ENCODE measurements at regions of chr12 and their contacts with region 1.

Region 1: GRCh38 chr12:56688129-56688845 is at the start of gene PTGES3:
- DNase-seq: peak; percentile 94 to 99 (median 97)
- ATAC-seq: peak; percentile 69
- H3K4me3 ChIP-seq: peak within 1 kb of the TSS; percentile 75 to 99
- H3K4me3 Mint-ChIP-seq: peak within 1 kb of the TSS; percentile 98
- H3K27ac ChIP-seq: peak within 1 kb of the TSS; percentile 97 to 98
- H3K27ac Mint-ChIP-seq: peak within 1 kb of the TSS; percentile 99
- H3K4me1 ChIP-seq: peaks cover 35% of the 10 kb centered on the region
- H3K4me1 Mint-ChIP-seq: peaks cover 34% of the 10 kb centered on the region
- H3K27me3 ChIP-seq: no peaks in the 10 kb centered on the region
- H3K27me3 Mint-ChIP-seq: no peaks in the 10 kb centered on the region
- CTCF ChIP-seq: no peak
- total RNA-seq, gene PTGES3: 148 to 154 TPM

Region 2: GRCh38 chr12:56127888-56128669 is 560.2 kb before region 1 on chr12 and contains the start of gene ESYT1:
- CTCF ChIA-PET with region 1: no interaction called
- POLR2A ChIA-PET with region 1: no interaction called
- intact Hi-C with region 1: loop called in 1 of 2 experiments (anchors 5 kb)
- DNase-seq: peak; percentile 94 to 100 (median 96)
- ATAC-seq: peak; percentile 87
- H3K4me3 ChIP-seq: peak within 1 kb of the TSS; percentile 71 to 97
- H3K4me3 Mint-ChIP-seq: peak within 1 kb of the TSS; percentile 97
- H3K27ac ChIP-seq: peak within 1 kb of the TSS; percentile 79 to 86
- H3K27ac Mint-ChIP-seq: peak within 1 kb of the TSS; percentile 94
- H3K4me1 ChIP-seq: peaks cover 60% of the 10 kb centered on the region
- H3K4me1 Mint-ChIP-seq: peaks cover 64% of the 10 kb centered on the region
- H3K27me3 ChIP-seq: no peaks in the 10 kb centered on the region
- H3K27me3 Mint-ChIP-seq: no peaks in the 10 kb centered on the region
- CTCF ChIP-seq: no peak
- total RNA-seq, gene ESYT1: 82.4 to 83.0 TPM

Region 3: GRCh38 chr12:56630160-56630632 is 58.1 kb before region 1 on chr12 and contains the start of gene BAZ2A:
- CTCF ChIA-PET with region 1: interaction called, 12 read pairs
- POLR2A ChIA-PET with region 1: interaction called, 36 read pairs
- intact Hi-C with region 1: no loop called
- DNase-seq: peak; percentile 64 to 91 (median 85)
- ATAC-seq: peak; percentile 68
- H3K4me3 ChIP-seq: peak within 1 kb of the TSS; percentile 74 to 99
- H3K4me3 Mint-ChIP-seq: peak within 1 kb of the TSS; percentile 82
- H3K27ac ChIP-seq: peak within 1 kb of the TSS; percentile 84 to 93
- H3K27ac Mint-ChIP-seq: peak within 1 kb of the TSS; percentile 93
- H3K4me1 ChIP-seq: peaks cover 56% of the 10 kb centered on the region
- H3K4me1 Mint-ChIP-seq: peaks cover 64% of the 10 kb centered on the region
- H3K27me3 ChIP-seq: no peaks in the 10 kb centered on the region
- H3K27me3 Mint-ChIP-seq: no peaks in the 10 kb centered on the region
- CTCF ChIP-seq: no peak
- total RNA-seq, gene BAZ2A: 197 to 198 TPM

Region 4: GRCh38 chr12:56645717-56646446 is 42.4 kb before region 1 on chr12 and contains the start of gene ATP5F1B:
- CTCF ChIA-PET with region 1: interaction called, 3 read pairs
- POLR2A ChIA-PET with region 1: interaction called, 26 read pairs
- intact Hi-C with region 1: loop called (anchors 1 to 2 kb)
- DNase-seq: peak; percentile 77 to 99 (median 88)
- ATAC-seq: peak; percentile 93
- H3K4me3 ChIP-seq: peak within 1 kb of the TSS; percentile 96 to 99
- H3K4me3 Mint-ChIP-seq: peak within 1 kb of the TSS; percentile 96
- H3K27ac ChIP-seq: peak within 1 kb of the TSS; percentile 90 to 94
- H3K27ac Mint-ChIP-seq: peak within 1 kb of the TSS; percentile 99
- H3K4me1 ChIP-seq: peaks cover 21% of the 10 kb centered on the region
- H3K4me1 Mint-ChIP-seq: peaks cover 33% of the 10 kb centered on the region
- H3K27me3 ChIP-seq: no peaks in the 10 kb centered on the region
- H3K27me3 Mint-ChIP-seq: no peaks in the 10 kb centered on the region
- CTCF ChIP-seq: no peak
- total RNA-seq, gene ATP5F1B: 417 to 429 TPM

Region 5: DNA sequence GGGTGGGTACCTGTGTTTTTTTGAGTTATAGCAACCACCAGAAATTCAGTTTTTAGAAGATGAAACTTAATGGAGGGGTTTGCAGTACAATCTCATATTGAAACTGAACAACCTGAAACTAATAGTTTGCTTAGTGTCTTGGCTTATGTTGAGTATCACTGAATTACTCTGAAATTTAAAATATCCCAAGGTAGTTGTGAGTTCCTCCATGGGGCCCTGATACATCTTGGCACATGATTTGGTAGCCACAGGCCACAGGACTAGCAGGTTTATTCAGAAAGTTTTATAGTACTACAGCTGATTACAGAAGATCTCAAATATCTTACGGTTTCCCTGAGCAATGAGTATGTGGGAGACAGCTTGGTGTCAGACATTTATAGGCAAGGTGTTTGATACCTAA is 10.6 kb before region 1 on chr12:
- CTCF ChIA-PET with region 1: interaction called, 3 read pairs
- POLR2A ChIA-PET with region 1: interaction called, 19 read pairs
- intact Hi-C with region 1: no loop called
- DNase-seq: no peak
- ATAC-seq: no peak
- H3K4me3 ChIP-seq: no peak overlapping the region
- H3K4me3 Mint-ChIP-seq: no peak overlapping the region
- H3K27ac ChIP-seq: peak overlapping the region in 1 of 2 experiments; percentile 27
- H3K27ac Mint-ChIP-seq: peak overlapping the region; percentile 65
- H3K4me1 ChIP-seq: peaks cover 72% of the 10 kb centered on the region
- H3K4me1 Mint-ChIP-seq: peaks cover 74% of the 10 kb centered on the region
- H3K27me3 ChIP-seq: no peaks in the 10 kb centered on the region
- H3K27me3 Mint-ChIP-seq: no peaks in the 10 kb centered on the region
- CTCF ChIP-seq: no peak

Region 6: DNA sequence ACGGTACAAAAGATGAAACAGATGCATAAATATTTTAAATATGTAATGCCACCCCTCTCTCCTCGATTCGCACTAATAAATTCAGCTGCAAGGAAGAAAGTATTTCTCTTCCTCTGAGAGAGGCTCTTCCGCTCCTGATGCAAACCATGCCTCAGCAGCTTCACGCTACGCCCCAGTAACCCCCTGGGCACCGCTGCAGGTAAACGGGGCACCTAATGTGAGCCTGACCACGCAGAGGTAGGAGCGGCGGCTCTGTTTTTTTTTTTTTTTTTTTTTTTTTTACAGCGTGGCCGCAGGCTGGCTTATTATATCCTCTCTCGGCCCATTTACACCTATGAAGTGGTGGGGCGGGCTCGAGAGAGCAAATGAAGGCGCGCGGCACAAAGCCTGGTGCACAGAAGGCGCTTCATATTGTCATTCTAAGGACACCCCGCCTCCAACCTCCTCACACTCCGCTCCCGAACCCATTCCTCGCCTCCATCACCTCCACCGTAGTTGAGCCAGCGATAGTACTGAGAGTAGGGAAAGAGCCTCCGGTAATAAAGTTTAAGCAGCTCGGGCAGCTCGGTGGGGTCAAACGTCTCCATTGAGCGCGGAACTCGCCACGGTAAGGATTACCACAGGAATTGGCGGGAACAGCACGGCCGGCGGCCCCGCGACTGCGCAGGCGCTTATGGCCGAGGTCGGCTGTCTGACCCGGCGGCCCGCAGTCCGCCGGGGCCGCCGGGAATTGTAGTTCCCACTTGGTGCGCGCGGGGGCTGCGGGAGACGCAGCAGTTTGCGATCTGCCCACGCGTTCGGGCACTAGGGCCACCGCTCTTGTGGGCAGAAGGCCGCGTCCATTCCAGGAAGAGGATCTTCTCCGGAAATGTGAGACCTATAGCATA is 63.7 kb after region 1 on chr12 and contains the start of gene PRIM1:
- CTCF ChIA-PET with region 1: interaction called, 3 read pairs
- POLR2A ChIA-PET with region 1: interaction called, 3 read pairs
- intact Hi-C with region 1: loop called (anchors 1 kb)
- DNase-seq: peak; percentile 58 to 89 (median 81)
- ATAC-seq: peak; percentile 81
- H3K4me3 ChIP-seq: peak within 1 kb of the TSS; percentile 91 to 99
- H3K4me3 Mint-ChIP-seq: peak within 1 kb of the TSS; percentile 97
- H3K27ac ChIP-seq: peak within 1 kb of the TSS; percentile 71 to 76
- H3K27ac Mint-ChIP-seq: peak within 1 kb of the TSS; percentile 86
- H3K4me1 ChIP-seq: peaks cover 11% of the 10 kb centered on the region
- H3K4me1 Mint-ChIP-seq: peaks cover 22% of the 10 kb centered on the region
- H3K27me3 ChIP-seq: no peaks in the 10 kb centered on the region
- H3K27me3 Mint-ChIP-seq: no peaks in the 10 kb centered on the region
- CTCF ChIP-seq: peak; percentile 23
- total RNA-seq, gene PRIM1: 5.0 to 5.8 TPM

Region 7: GRCh38 chr12:56908136-56908535 is 219.8 kb after region 1 on chr12:
- CTCF ChIA-PET with region 1: no interaction called
- POLR2A ChIA-PET with region 1: no interaction called
- intact Hi-C with region 1: no loop called
- DNase-seq: no peak
- ATAC-seq: no peak
- H3K4me3 ChIP-seq: no peak overlapping the region
- H3K4me3 Mint-ChIP-seq: no peak overlapping the region
- H3K27ac ChIP-seq: no peak overlapping the region
- H3K27ac Mint-ChIP-seq: no peak overlapping the region
- H3K4me1 ChIP-seq: no peaks in the 10 kb centered on the region
- H3K4me1 Mint-ChIP-seq: no peaks in the 10 kb centered on the region
- H3K27me3 ChIP-seq: no peaks in the 10 kb centered on the region
- H3K27me3 Mint-ChIP-seq: peaks cover 12% of the 10 kb centered on the region
- CTCF ChIP-seq: no peak

Region 8: DNA sequence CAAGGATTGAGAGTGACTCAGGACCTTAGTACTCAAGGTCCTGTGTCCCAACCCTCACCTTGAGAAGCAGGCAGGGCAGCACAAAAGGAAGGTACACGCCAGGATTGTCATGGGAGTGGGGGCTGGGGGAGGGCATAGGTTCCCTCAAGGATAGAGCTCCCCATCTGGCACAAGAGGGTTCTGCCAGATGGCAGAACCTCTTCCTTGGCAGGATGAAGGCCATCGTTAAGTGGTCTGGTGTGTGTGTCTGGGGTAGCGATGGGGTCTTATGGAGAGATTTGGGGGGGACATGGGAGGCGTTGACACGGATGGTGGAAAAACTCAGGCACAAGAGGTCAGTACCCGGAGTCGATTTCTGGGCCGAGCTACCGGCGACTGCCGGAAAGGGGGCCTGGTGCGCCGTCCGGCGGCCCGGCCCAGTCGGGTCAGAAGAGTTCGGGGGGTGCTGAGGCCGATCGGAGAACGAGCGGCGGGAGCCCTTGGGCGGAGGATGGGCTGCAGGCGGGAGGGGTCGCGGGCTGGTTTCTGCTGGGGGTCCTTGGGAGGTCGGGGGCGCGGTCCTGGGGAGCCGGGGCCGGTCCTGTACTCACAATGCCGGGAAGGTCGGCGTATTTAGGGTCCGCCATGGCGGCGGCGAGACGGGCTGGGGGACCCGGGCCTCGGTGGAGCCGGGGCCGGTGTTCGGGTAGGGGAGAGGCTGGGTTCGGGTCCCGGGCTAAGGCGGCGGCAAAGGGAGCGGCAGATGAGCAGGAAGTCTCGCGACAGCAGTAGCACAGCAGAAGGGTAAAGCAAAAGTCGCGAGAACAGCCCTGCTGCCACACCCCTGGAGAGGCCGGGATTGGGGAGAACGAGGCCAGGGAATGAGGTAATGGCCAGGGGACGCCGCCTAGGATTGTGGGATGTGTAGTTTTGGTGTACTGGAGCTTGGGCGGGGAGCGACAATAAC is 858.4 kb after region 1 on chr12 and contains the start of gene DCTN2:
- CTCF ChIA-PET with region 1: no interaction called
- POLR2A ChIA-PET with region 1: no interaction called
- intact Hi-C with region 1: loop called in 1 of 2 experiments (anchors 5 kb)
- DNase-seq: peak; percentile 79 to 97 (median 89)
- ATAC-seq: peak; percentile 94
- H3K4me3 ChIP-seq: peak within 1 kb of the TSS; percentile 63 to 94
- H3K4me3 Mint-ChIP-seq: peak within 1 kb of the TSS; percentile 92
- H3K27ac ChIP-seq: peak within 1 kb of the TSS; percentile 63 to 87
- H3K27ac Mint-ChIP-seq: peak within 1 kb of the TSS; percentile 91
- H3K4me1 ChIP-seq: peaks cover 27% of the 10 kb centered on the region
- H3K4me1 Mint-ChIP-seq: peaks cover 57% of the 10 kb centered on the region
- H3K27me3 ChIP-seq: no peaks in the 10 kb centered on the region
- H3K27me3 Mint-ChIP-seq: no peaks in the 10 kb centered on the region
- CTCF ChIP-seq: no peak
- total RNA-seq, gene DCTN2: 39.2 to 43.3 TPM

Measured in CD8-positive, alpha-beta T cell (primary cell).